ENCODE measurements at regions of chr12 and their contacts with region 1.

Region 1: DNA sequence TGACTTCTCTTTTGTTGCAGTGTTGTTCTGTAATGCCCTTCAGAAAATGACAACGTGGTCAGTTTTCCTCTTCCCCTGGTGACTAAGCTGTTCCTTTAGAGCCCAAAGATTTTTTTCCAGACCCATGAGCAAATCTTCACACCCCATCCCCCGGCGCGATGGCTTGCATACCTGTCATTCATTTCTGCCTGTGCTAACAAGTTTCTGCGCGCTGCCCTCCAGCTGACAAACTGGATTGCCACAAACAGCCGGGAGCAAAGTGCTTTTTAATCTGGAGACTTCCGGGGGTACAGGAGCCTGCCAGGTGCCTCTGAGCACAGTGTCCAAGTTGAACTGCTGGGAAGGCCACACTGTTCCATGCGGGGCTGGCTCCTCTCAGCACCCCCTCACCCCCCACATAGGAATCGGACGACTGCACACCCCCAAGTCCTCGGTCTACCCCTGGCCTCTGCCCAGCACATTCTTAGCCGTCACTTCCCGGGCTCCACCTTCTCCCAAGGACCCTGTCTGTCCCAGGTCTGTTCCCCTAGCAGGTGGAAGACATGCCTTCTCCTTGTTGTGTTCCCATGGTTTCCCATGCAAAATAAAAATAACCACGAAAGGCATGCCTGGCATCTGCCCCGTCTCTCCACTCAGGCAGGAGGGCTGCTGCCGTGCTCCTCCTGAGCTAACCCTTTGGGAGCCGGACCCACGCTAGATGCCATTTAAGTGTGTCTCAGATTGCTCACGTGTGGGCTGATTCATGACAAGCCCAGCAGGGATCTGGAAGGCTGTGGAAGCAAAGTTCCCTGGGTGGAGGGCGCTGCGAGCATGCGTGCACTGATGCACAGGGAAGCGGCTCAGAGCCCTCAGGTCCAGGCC is 14.1 kb downstream of the RILPL1 start:
- DNase-seq: peak; percentile 26 to 91
- H3K4me3 ChIP-seq: peak overlapping the region; percentile 29 to 50
- H3K27ac ChIP-seq: peak overlapping the region; percentile 72 to 82
- H3K4me1 ChIP-seq: peaks cover 6 to 15% of the 10 kb centered on the region in 2 donors
- H3K27me3 ChIP-seq: no peaks in the 10 kb centered on the region
- CTCF ChIP-seq: peak in 1 of 3 experiments; percentile 5

Region 2: GRCh38 chr12:123365025-123365917 is 154.1 kb before region 1 on chr12:
- intact Hi-C with region 1: loop called (anchors 1 kb)
- DNase-seq: peak; percentile 95 to 99
- H3K4me3 ChIP-seq: peak overlapping the region; percentile 89 to 93
- H3K27ac ChIP-seq: peak overlapping the region; percentile 90 to 92
- H3K4me1 ChIP-seq: peaks cover 4 to 22% of the 10 kb centered on the region in 2 donors
- H3K27me3 ChIP-seq: no peaks in the 10 kb centered on the region
- CTCF ChIP-seq: peak; percentile 70 to 80 (median 76)

Region 3: GRCh38 chr12:123388177-123388947 is 131.0 kb before region 1 on chr12:
- intact Hi-C with region 1: loop called (anchors 5 kb)
- DNase-seq: peak; percentile 33 to 90
- H3K4me3 ChIP-seq: peak overlapping the region; percentile 57 to 71
- H3K27ac ChIP-seq: peak overlapping the region; percentile 84 to 93
- H3K4me1 ChIP-seq: peaks cover 11 to 41% of the 10 kb centered on the region in 2 donors
- H3K27me3 ChIP-seq: no peaks in the 10 kb centered on the region
- CTCF ChIP-seq: peak in 1 of 3 experiments; percentile 25

Region 4: DNA sequence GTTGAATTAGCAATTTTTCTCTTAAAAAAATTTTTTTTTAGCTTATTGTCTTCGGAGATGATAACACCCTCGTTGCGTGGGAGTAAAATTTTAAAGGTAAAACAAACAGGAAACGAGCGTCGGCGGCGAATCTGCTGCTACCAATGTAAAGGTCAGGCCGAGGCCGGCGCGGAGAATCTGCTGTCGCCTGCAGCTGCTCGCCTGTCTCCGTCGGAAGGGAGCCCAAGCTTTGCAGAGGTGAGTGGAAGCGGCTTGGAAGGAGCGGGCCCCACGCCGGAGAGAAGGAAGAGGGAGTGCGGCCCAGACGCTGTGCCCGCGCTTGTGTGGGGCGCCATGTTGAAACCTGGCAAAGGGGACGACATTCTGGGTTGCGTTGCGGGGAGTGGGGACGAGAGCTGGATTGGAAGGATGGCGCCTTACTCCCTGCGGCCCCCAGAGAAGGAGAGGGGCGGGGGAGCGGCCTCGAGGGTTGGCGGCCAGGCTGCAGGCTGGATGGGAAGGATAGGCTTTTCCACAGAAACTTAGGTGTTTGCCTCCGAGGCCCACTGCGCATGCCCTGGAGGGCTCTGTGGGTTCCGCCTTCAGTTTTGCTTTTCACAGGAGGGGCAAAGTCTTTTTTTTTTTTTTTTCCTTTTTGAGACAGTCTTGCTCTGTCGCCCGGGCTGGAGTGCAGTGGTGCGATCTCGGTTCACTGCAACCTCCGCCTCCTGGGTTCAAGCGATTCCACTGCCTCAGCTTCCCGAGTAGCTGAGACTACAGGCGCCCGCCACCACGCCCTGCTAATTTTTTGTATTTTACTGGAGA is 61.2 kb before region 1 on chr12 and contains the start of gene SNRNP35:
- intact Hi-C with region 1: loop called (anchors 5 kb)
- DNase-seq: peak; percentile 31 to 83
- H3K4me3 ChIP-seq: peak within 1 kb of the TSS; percentile 82 to 93
- H3K27ac ChIP-seq: peak within 1 kb of the TSS; percentile 97 to 99
- H3K4me1 ChIP-seq: peaks cover 0 to 12% of the 10 kb centered on the region in 2 donors
- H3K27me3 ChIP-seq: no peaks in the 10 kb centered on the region
- CTCF ChIP-seq: no peak
- total RNA-seq, gene SNRNP35: 5.9 TPM

Region 5: DNA sequence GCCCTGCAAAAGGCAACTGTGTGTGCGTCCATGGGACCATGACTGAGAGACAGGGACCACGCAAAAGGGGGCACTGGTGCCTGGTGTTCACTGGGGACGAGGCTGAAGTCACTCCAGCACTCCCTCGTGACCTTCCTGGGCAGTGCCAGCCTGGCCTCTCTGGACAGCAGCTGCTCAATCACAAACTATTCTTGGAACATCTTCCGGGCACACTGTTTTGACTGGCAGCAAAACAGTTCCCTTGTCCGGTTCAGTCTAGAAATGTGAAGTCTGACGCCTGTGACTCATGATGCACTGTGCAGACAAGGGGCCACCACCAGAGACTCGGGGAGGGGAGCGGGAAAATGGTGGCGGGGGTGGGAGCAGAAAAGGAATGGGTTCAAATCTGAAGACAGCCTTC is 40.6 kb before region 1 on chr12:
- intact Hi-C with region 1: loop called (anchors 1 kb)
- DNase-seq: peak; percentile 72 to 92
- H3K4me3 ChIP-seq: peak overlapping the region; percentile 6 to 46
- H3K27ac ChIP-seq: peak overlapping the region; percentile 93 to 97
- H3K4me1 ChIP-seq: peaks cover 24 to 55% of the 10 kb centered on the region in 2 donors
- H3K27me3 ChIP-seq: no peaks in the 10 kb centered on the region
- CTCF ChIP-seq: no peak

Region 6: GRCh38 chr12:123533672-123534643 is 14.6 kb after region 1 on chr12 and contains the start of gene RILPL1:
- intact Hi-C with region 1: loop called (anchors 1 kb)
- DNase-seq: peak in 1 of 2 donors; percentile 68
- H3K4me3 ChIP-seq: peak within 1 kb of the TSS; percentile 89 to 93
- H3K27ac ChIP-seq: peak within 1 kb of the TSS; percentile 87 to 95
- H3K4me1 ChIP-seq: peaks cover 0 to 22% of the 10 kb centered on the region in 2 donors
- H3K27me3 ChIP-seq: no peaks in the 10 kb centered on the region
- CTCF ChIP-seq: peak; percentile 11 to 41 (median 22)
- total RNA-seq, gene RILPL1: 1.5 TPM